ENCODE measurements at regions of chr5 and their contacts with region 1.

Region 1: DNA sequence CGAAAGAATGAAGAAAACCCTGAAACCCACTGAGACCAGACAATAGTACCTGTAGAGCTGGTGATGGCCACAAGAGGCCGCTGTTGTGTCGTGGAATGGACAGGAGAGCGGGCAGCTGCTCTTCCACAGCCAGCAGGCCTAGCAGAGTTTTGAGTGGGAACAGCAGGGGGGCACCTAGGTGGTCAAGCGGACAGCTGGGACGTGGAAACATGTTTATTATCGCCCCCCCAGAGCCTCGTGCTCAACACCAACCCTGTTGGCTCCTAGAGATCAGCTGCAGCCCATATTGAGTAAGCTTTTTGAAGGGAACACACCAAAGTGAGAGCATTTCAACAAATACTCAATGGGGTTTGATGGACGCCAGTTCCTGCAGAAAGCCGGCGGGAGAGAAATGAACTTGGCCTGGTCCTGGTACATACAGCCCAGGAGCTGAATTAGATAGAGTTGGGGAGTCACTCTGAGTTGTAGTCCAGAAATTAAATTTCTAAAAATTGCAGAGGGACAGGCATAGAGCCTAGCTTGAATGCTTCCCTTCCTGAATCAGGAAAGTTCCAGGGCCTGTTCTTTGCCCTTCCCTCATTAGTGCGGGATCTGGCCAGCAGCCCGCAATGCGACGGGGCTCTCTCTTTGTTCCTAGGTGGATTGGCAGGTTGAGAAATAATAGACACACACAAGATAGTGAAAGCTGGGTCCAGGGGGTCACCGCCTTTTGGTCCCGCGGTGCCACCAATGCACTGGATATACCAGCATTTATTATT is 33.8 kb downstream of the MFAP3 start:
- DNase-seq: peak; percentile 89
- H3K4me3 Mint-ChIP-seq: no peak overlapping the region
- H3K27ac Mint-ChIP-seq: no peak overlapping the region
- H3K4me1 Mint-ChIP-seq: peaks cover 8% of the 10 kb centered on the region
- H3K27me3 Mint-ChIP-seq: no peaks in the 10 kb centered on the region

Region 2: GRCh38 chr5:154058055-154059038 is 14.2 kb before region 1 on chr5:
- CTCF ChIA-PET with region 1: interaction called, 33 read pairs
- POLR2A ChIA-PET with region 1: no interaction called
- intact Hi-C with region 1: no loop called
- DNase-seq: no peak
- H3K4me3 Mint-ChIP-seq: no peak overlapping the region
- H3K27ac Mint-ChIP-seq: no peak overlapping the region
- H3K4me1 Mint-ChIP-seq: peaks cover 10% of the 10 kb centered on the region
- H3K27me3 Mint-ChIP-seq: no peaks in the 10 kb centered on the region

Region 3: DNA sequence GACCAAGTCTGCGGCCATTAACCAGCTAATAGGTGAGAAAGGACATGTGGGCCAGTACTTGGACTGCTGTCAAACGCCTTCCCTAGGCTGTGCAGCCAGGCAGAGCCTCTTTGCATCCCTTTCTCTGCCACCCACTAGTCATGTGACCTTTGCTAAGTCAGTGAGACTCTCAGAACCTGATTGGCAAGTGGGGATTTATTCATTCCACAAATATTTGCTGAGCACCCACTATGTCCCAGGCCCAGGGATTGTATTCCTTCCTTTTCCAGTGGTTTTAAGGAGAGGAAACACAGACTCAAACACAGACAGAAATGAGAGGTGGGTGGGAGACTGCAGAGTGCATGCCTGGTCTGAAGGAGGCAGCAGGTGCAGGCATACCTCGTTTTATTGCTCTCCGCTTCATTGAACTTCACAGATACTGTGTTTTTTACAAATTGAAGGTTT is 46.3 kb after region 1 on chr5:
- CTCF ChIA-PET with region 1: no interaction called
- POLR2A ChIA-PET with region 1: no interaction called
- intact Hi-C with region 1: no loop called
- DNase-seq: no peak
- H3K4me3 Mint-ChIP-seq: no peak overlapping the region
- H3K27ac Mint-ChIP-seq: no peak overlapping the region
- H3K4me1 Mint-ChIP-seq: no peaks in the 10 kb centered on the region
- H3K27me3 Mint-ChIP-seq: peaks cover 7% of the 10 kb centered on the region

Region 4: GRCh38 chr5:154196955-154197652 is 124.5 kb after region 1 on chr5:
- CTCF ChIA-PET with region 1: interaction called, 60 read pairs
- POLR2A ChIA-PET with region 1: no interaction called
- intact Hi-C with region 1: loop called (anchors 5 kb)
- DNase-seq: no peak
- H3K4me3 Mint-ChIP-seq: no peak overlapping the region
- H3K27ac Mint-ChIP-seq: peak overlapping the region; percentile 65
- H3K4me1 Mint-ChIP-seq: peaks cover 71% of the 10 kb centered on the region
- H3K27me3 Mint-ChIP-seq: no peaks in the 10 kb centered on the region

Region 5: DNA sequence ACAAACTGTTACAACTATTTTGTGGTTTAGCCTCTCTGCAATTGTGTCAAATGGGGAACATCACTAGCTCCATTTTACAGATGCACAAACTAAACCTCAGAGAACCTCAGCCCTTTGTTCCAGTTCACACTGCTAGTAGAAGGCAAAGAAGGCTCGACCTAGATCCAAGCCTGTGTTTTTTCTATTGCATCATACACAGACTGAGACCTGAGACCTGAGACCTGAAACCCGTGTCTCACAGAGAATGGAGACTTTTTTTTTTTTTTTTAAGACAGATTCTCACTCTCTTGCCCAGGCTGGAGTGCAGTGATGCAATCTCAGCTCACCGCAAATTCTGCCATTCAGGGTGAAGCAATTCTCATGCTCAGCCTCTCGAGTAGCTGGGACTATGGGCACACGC is 238.8 kb after region 1 on chr5:
- CTCF ChIA-PET with region 1: interaction called, 5 read pairs
- POLR2A ChIA-PET with region 1: no interaction called
- intact Hi-C with region 1: loop called (anchors 10 kb)
- DNase-seq: peak; percentile 70
- H3K4me3 Mint-ChIP-seq: no peak overlapping the region
- H3K27ac Mint-ChIP-seq: peak overlapping the region; percentile 20
- H3K4me1 Mint-ChIP-seq: peaks cover 30% of the 10 kb centered on the region
- H3K27me3 Mint-ChIP-seq: no peaks in the 10 kb centered on the region

Region 6: DNA sequence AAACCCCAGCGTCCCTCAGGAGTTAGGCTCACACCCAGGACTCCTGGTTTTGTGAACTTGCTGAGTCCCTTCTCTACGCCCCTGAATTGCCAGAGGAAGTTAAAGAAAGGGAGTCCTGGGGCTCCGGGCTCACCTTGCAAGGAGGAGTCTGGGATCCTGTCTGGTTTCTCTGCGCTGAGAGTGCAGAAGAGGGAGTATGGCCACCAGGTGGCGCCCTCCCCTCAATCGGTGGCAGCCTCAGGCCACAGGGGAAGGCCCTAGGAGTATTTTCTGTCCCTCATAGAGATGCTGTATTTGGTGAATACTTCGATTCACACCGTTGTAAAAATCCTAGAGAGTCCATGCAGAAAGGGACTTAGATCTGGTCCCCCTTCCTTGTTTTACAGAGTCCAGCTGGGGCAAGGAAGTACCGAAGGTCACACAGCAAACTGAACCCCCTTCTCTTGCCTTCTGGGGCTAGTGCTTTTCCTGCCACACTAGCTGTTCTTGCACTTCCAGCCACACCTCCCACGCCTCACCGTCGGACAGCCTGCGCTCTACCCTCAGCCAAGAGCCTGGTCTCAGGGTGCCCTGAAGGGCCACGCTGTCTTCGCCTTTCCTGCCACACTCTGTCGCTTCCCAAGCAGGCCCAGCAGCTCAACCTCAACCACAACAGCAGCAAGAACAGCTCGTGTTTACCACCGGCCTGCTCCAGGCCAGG is 395.2 kb after region 1 on chr5:
- CTCF ChIA-PET with region 1: interaction called, 16 read pairs
- POLR2A ChIA-PET with region 1: no interaction called
- intact Hi-C with region 1: loop called (anchors 1 kb)
- DNase-seq: peak; percentile 84
- H3K4me3 Mint-ChIP-seq: no peak overlapping the region
- H3K27ac Mint-ChIP-seq: no peak overlapping the region
- H3K4me1 Mint-ChIP-seq: peaks cover 6% of the 10 kb centered on the region
- H3K27me3 Mint-ChIP-seq: peaks cover 35% of the 10 kb centered on the region

Measured in activated CD4-positive, alpha-beta memory T cell treated with anti-CD3 and anti-CD28 coated beads for 36 hours (primary cell).